ENCODE measurements at regions of chr2 and their contacts with region 1.

Region 1: DNA sequence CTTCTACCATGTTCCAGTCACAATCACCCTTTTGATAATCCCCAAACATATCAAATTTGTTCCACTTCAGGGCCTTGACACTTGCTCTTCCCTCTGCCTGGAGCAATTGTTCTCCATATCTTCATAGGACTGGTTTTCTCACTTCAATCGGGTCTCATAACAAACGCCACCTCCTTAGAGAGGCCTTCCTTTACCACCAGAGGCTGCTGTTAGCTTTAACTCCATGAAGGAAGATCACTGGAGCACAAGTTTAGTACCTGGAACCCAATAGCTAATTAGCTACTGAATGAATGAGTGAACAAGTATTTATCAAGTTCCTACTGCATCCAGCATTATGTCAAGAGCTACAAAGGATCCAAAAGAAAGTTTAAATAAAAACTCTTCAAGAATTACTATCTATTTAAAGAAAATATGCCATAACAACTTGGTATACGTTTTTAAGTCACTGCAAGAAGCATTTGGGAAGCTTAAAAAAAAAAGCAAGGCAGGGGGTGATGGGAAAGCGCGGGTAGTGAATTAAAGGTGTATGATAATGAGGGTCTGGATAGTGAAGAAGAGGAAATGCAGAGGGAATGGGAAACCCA is 58.8 kb downstream of the BAZ2B start:
- H3K4me3 Mint-ChIP-seq: no peak overlapping the region
- H3K27ac Mint-ChIP-seq: peak overlapping the region; percentile 51
- H3K4me1 Mint-ChIP-seq: peaks cover 32% of the 10 kb centered on the region
- H3K27me3 Mint-ChIP-seq: no peaks in the 10 kb centered on the region

Region 2: GRCh38 chr2:159484532-159484931 is 73.0 kb before region 1 on chr2:
- intact Hi-C with region 1: no loop called
- H3K4me3 Mint-ChIP-seq: no peak overlapping the region
- H3K27ac Mint-ChIP-seq: no peak overlapping the region
- H3K4me1 Mint-ChIP-seq: no peaks in the 10 kb centered on the region
- H3K27me3 Mint-ChIP-seq: no peaks in the 10 kb centered on the region

Region 3: GRCh38 chr2:159506764-159507440 is 50.6 kb before region 1 on chr2:
- intact Hi-C with region 1: no loop called
- H3K4me3 Mint-ChIP-seq: no peak overlapping the region
- H3K27ac Mint-ChIP-seq: peak overlapping the region; percentile 13
- H3K4me1 Mint-ChIP-seq: peaks cover 42% of the 10 kb centered on the region
- H3K27me3 Mint-ChIP-seq: no peaks in the 10 kb centered on the region

Region 4: DNA sequence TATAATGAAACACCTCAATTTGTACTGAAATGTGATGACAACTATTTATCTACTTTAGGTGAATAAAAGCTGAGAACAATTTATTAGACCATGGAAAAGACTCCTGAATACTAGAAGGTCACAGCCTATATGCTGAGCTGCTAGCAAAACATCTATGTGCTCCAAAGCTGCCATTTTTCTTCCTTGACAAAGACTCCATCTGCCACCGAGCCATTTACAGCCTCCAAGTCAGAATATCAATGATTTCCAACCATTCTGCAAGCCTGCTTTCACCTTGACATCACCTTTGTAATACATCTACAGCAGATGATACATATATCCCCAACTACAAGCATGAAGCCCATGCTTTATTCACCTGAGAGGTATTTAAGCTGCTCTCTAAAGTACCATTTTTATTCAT is 26.1 kb before region 1 on chr2:
- intact Hi-C with region 1: no loop called
- H3K4me3 Mint-ChIP-seq: no peak overlapping the region
- H3K27ac Mint-ChIP-seq: no peak overlapping the region
- H3K4me1 Mint-ChIP-seq: peaks cover 12% of the 10 kb centered on the region
- H3K27me3 Mint-ChIP-seq: no peaks in the 10 kb centered on the region

Region 5: DNA sequence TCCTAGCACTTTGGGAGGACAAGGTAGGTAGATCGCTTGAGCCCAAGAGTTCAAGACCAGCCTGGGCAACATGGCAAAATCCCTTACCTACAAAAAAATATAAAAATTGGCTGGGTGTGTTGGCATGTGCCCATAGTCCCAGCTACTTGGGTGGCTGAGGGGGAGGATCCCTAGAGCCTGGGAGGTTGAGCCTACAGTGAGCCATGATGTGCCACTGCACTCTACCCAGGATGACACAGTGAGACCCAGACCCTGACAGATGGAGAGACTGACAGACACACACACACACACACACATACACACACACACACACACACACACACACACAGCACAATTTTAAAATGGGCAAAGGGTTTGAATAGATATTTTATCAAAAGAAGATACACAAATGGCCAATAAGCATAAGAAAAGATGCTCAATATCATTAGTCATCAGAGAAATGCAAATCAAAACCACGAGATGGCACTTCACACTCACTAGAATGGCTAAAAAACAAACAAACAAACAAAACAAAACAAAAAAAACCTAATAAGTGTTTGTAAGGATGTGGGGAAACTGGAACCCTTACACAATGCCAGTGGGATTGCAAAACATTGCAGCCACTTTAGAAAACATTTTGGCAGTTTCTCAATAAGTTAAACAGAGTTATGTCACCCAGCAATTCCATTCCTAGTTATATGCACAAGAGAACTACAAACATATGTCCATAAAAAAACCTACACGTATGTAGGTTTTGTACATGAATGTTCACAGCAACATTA is 16.5 kb after region 1 on chr2:
- intact Hi-C with region 1: no loop called
- H3K4me3 Mint-ChIP-seq: no peak overlapping the region
- H3K27ac Mint-ChIP-seq: no peak overlapping the region
- H3K4me1 Mint-ChIP-seq: peaks cover 45% of the 10 kb centered on the region
- H3K27me3 Mint-ChIP-seq: no peaks in the 10 kb centered on the region

Region 6: DNA sequence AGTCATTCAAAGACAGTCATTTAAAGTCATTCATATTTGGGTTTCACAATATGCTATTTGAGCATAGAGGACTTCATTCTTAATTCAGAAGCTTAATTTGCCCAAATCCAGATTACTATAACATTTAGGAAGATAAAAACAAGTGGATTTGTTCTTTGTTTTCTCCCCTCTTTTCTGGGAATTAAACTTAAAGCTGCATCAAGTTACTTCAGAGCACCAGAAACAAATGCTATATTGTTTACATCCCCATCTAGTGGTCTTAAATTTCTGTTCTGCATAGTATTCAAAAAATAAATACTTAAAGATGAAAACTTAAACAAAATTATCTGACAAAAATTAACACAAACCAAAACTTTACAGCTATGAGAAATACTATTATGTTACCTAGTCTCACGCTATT is 120.1 kb after region 1 on chr2:
- intact Hi-C with region 1: loop called (anchors 10 kb)
- H3K4me3 Mint-ChIP-seq: no peak overlapping the region
- H3K27ac Mint-ChIP-seq: no peak overlapping the region
- H3K4me1 Mint-ChIP-seq: peaks cover 6% of the 10 kb centered on the region
- H3K27me3 Mint-ChIP-seq: no peaks in the 10 kb centered on the region